Right cardiac atrium (tissue), 5 donors: ENCODE measurements at regions of chr10 and their contacts with region 1.

Region 1: GRCh38 chr10:44864637-44865288 is 46.4 kb upstream of the TMEM72 start:
- DNase-seq: peak; percentile 92 to 97 (median 97)
- ATAC-seq: peak; percentile 96 to 97
- H3K4me3 ChIP-seq: peak overlapping the region; percentile 44
- H3K27ac ChIP-seq: peak overlapping the region; percentile 21
- H3K4me1 ChIP-seq: no peaks in the 10 kb centered on the region
- H3K27me3 ChIP-seq: no peaks in the 10 kb centered on the region

Region 2: DNA sequence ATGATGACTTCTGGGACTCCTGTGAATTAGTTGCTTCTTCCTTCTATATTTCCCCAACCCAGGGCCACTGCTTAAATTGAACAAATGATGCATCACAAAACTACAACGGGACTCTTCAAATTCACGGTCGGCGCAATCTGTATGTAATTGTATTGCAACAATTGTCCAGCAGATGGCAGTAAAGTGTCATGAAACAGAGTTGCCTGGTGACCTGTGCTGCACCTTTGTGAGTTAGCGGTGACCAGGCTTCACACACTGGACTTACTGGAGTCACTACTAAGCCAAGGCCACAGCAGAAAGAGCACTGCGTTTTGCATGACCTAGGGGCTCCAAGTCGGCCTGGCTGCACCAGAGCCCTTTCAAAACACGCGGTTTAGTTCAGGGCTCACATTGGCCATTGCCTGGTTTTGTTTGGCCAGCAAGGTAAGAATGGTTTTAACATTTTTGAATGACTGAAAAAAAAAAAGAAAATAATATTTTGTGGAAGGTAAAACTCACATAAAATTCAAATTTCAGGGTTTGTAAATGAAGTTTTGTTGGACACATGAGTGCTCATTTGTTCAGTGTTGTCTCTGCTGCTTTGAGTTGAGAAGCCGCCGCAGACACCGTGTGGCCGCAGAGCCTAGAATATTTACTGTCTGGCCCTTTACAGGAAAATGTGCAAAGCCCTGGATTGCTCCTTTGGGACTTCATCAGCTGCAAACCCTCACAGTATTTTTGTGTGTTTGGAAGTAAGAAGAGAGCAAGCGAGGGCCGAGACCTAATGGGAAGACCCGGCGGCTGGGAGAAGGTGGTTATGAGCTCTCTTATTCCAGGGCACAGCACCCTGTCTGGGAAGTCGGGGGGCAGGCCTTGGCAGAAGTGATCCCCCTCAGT is 1192.9 kb before region 1 on chr10:
- intact Hi-C with region 1: loop called (anchors 2 to 5 kb)
- DNase-seq: peak in 2 of 3 donors; percentile 38 to 71
- ATAC-seq: peak; percentile 51 to 62
- H3K4me3 ChIP-seq: no peak overlapping the region
- H3K27ac ChIP-seq: no peak overlapping the region
- H3K4me1 ChIP-seq: no peaks in the 10 kb centered on the region
- H3K27me3 ChIP-seq: no peaks in the 10 kb centered on the region

Region 3: DNA sequence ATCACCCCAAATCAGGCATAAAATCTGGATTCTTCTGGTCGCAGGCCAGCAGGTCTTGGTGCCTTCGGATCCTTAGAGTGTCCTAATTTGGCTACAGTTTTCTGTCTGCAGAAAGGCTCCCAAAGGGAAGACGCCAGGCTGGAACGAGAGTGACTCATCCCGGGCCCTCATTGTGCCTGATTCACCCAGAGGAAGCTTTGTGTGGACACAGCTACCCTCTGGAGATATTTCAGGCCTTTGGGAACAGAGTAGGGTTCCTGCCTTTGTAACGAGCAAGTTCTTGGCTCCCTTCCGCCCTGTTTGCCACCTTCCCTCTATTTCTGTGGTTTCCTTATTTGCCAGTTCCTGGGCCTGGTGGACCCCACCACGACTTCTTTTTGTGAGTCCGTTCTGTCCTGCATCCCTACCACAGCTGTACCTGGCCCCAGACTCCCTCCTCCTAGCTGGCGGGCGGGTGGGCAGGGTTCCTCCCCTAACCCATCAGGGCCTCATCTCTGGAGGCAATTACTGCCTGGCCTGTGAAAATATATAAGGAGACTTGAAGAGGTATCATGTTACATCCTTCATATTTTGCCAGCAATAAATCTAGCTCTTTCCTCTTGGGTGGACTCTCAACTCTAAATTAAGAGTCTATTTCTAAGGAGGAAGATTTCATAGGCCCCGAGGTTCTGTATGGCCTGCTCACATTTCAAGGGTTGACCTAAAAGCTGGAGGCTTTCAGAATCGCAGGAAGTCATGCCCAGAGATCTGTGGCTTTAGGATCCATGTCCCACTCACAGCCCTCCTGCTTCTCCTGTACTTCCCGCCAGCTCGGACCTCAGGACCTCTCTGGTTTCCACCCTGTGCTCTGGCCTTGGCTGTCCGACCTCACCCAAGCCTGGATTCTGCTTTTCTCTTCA is 996.8 kb before region 1 on chr10:
- intact Hi-C with region 1: no loop called
- DNase-seq: no peak
- ATAC-seq: no peak
- H3K4me3 ChIP-seq: no peak overlapping the region
- H3K27ac ChIP-seq: peak overlapping the region; percentile 31
- H3K4me1 ChIP-seq: peaks cover 23% of the 10 kb centered on the region
- H3K27me3 ChIP-seq: no peaks in the 10 kb centered on the region

Region 4: GRCh38 chr10:44398747-44399658 is 465.8 kb before region 1 on chr10:
- intact Hi-C with region 1: loop called in 1 of 4 experiments (anchors 10 kb)
- DNase-seq: no peak
- ATAC-seq: no peak
- H3K4me3 ChIP-seq: no peak overlapping the region
- H3K27ac ChIP-seq: no peak overlapping the region
- H3K4me1 ChIP-seq: no peaks in the 10 kb centered on the region
- H3K27me3 ChIP-seq: no peaks in the 10 kb centered on the region